ENCODE measurements at regions of chr1 and their contacts with region 1.

Region 1: GRCh38 chr1:203492082-203492747 is 1.7 kb upstream of the OPTC start:
- DNase-seq: no peak
- ATAC-seq: no peak
- H3K4me3 ChIP-seq: no peak overlapping the region
- H3K27ac ChIP-seq: no peak overlapping the region
- H3K4me1 ChIP-seq: peaks cover 8% of the 10 kb centered on the region
- H3K27me3 ChIP-seq: no peaks in the 10 kb centered on the region
- CTCF ChIP-seq: no peak

Region 2: DNA sequence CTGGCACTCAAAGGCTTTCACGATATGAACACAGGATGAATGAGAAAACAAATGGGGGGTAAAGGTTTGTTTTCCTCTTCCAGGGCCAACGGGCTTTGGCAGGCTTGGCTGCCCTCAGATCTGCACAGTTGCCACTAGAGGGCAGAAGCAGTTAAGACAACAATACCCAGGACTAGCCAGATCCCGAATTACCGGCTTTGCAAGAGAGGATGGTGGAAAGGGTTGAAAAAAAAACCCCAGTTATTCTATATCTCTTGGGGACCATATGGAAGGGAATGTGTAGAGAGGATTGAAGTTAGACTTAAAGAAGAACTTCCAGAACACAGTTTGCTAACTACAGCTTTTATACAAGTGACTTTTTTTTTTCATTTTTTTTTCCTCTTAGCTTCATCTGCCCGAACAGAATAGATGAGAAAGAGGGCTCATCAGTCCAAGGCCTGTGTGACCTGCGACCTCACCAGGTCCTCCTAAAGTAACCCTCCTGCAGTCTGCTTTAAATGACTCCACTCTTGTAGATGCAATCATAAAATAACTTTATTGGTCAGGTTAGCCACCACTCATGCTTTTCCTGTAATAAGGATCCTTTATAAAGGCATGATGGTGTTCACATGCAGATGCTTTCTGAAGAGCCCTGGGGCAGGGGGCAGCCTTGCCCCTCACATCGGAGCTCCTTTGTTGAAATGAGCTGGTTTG is 152.0 kb before region 1 on chr1:
- intact Hi-C with region 1: loop called (anchors 5 kb)
- DNase-seq: peak; percentile 72
- ATAC-seq: peak; percentile 87
- H3K4me3 ChIP-seq: no peak overlapping the region
- H3K27ac ChIP-seq: no peak overlapping the region
- H3K4me1 ChIP-seq: peaks cover 13% of the 10 kb centered on the region
- H3K27me3 ChIP-seq: no peaks in the 10 kb centered on the region
- CTCF ChIP-seq: peak; percentile 94